ENCODE measurements at regions of chr6 and their contacts with region 1.

Region 1: DNA sequence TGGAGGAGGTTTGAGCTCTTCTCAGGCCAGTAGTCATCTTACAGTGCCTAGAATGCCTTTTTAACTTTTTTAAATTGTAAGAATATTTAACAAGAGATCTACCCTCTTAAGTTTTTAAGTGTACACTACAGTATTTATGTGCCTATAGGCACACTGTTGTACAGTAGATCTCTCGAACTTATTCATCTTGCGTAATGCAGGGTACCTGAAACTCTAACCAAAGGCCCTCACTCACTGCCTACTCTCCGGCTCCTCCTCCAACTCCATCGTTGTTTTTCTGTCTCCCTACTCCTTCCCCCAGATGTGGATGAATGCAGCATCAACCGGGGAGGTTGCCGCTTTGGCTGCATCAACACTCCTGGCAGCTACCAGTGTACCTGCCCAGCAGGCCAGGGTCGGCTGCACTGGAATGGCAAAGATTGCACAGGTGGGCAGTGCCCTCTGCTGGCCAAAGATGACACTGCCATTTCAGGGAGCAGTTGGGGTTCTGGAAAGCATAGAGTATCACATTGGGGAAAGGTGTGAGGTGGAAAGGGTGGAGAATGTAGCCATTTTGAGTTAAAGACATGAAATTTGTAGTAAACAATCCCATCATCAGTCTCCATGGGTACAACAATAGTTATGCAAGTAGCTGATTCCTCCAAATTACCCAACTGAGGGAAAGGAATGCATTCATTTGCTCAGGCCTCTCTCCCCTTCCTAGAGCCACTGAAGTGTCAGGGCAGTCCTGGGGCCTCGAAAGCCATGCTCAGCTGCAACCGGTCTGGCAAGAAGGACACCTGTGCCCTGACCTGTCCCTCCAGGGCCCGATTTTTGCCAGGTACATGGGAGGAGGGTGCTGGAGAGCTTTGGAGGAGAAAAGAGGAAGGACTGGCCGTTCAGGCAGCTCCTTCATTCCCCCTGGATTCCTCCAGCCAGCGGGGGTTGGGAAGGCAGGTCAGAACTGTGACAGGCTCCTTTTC is 18.4 kb upstream of the ZNF76 start:
- DNase-seq: peak; percentile 65
- H3K4me3 ChIP-seq: no peak overlapping the region
- H3K27ac ChIP-seq: no peak overlapping the region
- H3K4me1 ChIP-seq: peaks cover 20% of the 10 kb centered on the region
- H3K27me3 ChIP-seq: no peaks in the 10 kb centered on the region
- CTCF ChIP-seq: peak; percentile 86 to 94
- POLR2A ChIP-seq: no peak

Region 2: GRCh38 chr6:34459899-34460593 is 781.1 kb before region 1 on chr6:
- CTCF ChIA-PET with region 1: interaction called, 12 read pairs
- POLR2A ChIA-PET with region 1: no interaction called
- dilution Hi-C with region 1: no loop called
- intact Hi-C with region 1: no loop called
- DNase-seq: peak; percentile 60
- H3K4me3 ChIP-seq: no peak overlapping the region
- H3K27ac ChIP-seq: no peak overlapping the region
- H3K4me1 ChIP-seq: no peaks in the 10 kb centered on the region
- H3K27me3 ChIP-seq: peaks cover 0 to 10% of the 10 kb centered on the region in 2 experiments
- CTCF ChIP-seq: peak; percentile 61 to 70
- POLR2A ChIP-seq: no peak

Region 3: GRCh38 chr6:35139908-35140655 is 101.0 kb before region 1 on chr6:
- CTCF ChIA-PET with region 1: interaction called, 181 read pairs
- POLR2A ChIA-PET with region 1: no interaction called
- dilution Hi-C with region 1: no loop called
- intact Hi-C with region 1: loop called (anchors 2 kb)
- DNase-seq: peak; percentile 75
- H3K4me3 ChIP-seq: no peak overlapping the region
- H3K27ac ChIP-seq: no peak overlapping the region
- H3K4me1 ChIP-seq: no peaks in the 10 kb centered on the region
- H3K27me3 ChIP-seq: no peaks in the 10 kb centered on the region
- CTCF ChIP-seq: peak; percentile 62 to 80
- POLR2A ChIP-seq: no peak

Region 4: GRCh38 chr6:35161776-35162607 is 79.1 kb before region 1 on chr6:
- CTCF ChIA-PET with region 1: interaction called, 12 read pairs
- POLR2A ChIA-PET with region 1: no interaction called
- dilution Hi-C with region 1: no loop called
- intact Hi-C with region 1: no loop called
- DNase-seq: peak; percentile 41
- H3K4me3 ChIP-seq: no peak overlapping the region
- H3K27ac ChIP-seq: no peak overlapping the region
- H3K4me1 ChIP-seq: peaks cover 18% of the 10 kb centered on the region
- H3K27me3 ChIP-seq: no peaks in the 10 kb centered on the region
- CTCF ChIP-seq: no peak
- POLR2A ChIP-seq: no peak

Region 5: GRCh38 chr6:35213824-35214756 is 27.0 kb before region 1 on chr6 and contains the start of gene SCUBE3:
- CTCF ChIA-PET with region 1: interaction called, 113 read pairs
- POLR2A ChIA-PET with region 1: no interaction called
- dilution Hi-C with region 1: no loop called
- intact Hi-C with region 1: no loop called
- DNase-seq: peak; percentile 31
- H3K4me3 ChIP-seq: peak within 1 kb of the TSS; percentile 14 to 40 (median 36)
- H3K27ac ChIP-seq: no peak within 1 kb of the TSS
- H3K4me1 ChIP-seq: peaks cover 5% of the 10 kb centered on the region
- H3K27me3 ChIP-seq: peaks cover 34 to 44% of the 10 kb centered on the region in 2 experiments
- CTCF ChIP-seq: no peak
- POLR2A ChIP-seq: no peak
- total RNA-seq, gene SCUBE3: 0.62 and 1.5 TPM in 2 replicates

Region 6: DNA sequence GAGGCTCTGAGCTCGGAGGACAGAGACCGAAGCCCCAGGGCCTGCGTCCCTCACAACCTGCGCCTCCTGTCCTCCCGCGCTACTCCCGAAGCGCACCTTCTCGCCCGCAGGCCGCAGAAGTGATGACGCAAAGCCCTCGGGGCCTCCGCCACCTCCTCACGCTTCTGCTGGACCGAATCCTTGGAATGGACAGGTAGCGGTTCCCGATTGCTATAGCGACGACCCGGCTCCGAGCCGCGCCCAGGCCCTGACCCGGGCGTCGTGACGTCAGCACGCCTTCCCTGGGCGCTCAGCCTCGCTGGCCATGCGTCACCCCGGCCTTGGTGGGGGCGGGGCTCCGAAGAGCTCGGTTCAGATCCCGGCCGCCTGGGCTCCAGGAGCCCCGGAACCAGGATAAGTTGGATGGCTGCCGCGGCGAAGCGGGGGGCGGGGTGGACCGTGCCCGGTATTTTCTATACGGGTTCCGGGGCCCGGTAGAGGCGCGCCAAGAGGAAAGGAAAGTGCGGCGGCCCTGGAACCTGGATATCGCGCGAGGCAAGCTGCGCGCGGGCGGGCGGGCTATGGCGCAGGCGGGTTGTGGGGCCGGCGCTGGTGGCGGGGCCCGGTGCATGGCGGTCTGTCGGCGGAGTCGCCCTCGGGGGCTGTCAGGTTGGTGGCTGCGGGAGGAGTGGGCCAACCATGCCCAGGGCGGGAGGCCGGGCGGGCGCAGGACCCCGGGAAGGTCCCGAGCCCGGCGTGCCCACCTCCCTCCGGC is 18.2 kb after region 1 on chr6 and contains the start of gene ZNF76:
- CTCF ChIA-PET with region 1: interaction called, 21 read pairs
- POLR2A ChIA-PET with region 1: no interaction called
- dilution Hi-C with region 1: no loop called
- intact Hi-C with region 1: no loop called
- DNase-seq: peak; percentile 93
- H3K4me3 ChIP-seq: peak within 1 kb of the TSS; percentile 55 to 63 (median 62)
- H3K27ac ChIP-seq: peak within 1 kb of the TSS; percentile 25
- H3K4me1 ChIP-seq: peaks cover 14% of the 10 kb centered on the region
- H3K27me3 ChIP-seq: no peaks in the 10 kb centered on the region
- CTCF ChIP-seq: no peak
- POLR2A ChIP-seq: peak; percentile 71
- total RNA-seq, gene ZNF76: 26.7 and 34.6 TPM in 2 replicates

Measured in endothelial cell of umbilical vein (primary cell).